Mammary epithelial cell (primary cell): ENCODE measurements at regions of chr14 and their contacts with region 1.

Region 1: DNA sequence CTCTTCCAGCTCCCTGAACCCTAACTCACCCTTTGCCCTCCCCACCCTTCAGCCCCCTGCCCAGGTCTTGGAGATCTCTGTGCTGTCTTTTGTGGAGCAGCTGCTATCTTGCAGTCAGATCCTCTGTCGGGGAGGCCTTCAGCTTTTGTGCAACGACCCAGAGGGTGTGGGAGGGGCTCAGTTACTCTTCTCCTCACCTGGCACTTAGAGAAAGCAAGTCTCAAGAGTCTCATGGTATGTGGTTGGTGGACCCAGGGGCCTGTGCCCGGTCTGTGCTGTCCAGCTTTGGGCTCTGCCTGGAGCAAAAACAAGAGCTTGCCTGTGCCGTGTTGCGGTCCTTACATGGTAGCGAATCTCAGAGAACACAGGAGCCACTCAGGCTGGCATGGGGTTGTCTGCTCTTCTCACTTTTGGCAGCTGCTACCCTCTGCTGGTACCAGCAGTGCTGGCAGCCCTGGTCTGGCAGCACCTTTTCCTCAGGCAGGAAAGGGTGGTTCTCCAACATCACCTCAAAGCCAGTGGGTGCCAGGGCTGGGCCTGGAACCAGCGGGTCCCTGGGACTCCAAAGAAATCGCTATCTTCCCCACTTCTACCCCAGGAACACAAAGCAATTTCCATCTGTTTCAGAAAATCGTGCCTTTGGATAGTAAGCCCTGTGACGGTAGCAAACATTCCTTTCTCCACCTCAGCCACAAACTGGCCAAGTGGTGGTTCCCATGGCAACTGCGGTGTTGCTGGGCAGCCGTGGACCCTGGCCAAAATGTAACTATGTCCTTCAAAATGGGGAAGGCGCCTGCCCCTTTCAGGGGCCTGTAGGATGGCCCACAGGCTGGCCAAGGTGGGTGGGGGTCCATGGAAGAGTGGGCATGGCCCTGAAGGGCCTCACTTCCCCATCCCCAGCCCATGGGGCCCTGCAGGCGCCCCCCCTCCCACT is 90.0 kb downstream of the RIN3 start:
- DNase-seq: peak; percentile 51
- H3K4me3 ChIP-seq: no peak overlapping the region
- H3K27ac ChIP-seq: no peak overlapping the region
- H3K4me1 ChIP-seq: peaks cover 14% of the 10 kb centered on the region
- H3K27me3 ChIP-seq: no peaks in the 10 kb centered on the region
- CTCF ChIP-seq: peak; percentile 36 to 77

Region 2: DNA sequence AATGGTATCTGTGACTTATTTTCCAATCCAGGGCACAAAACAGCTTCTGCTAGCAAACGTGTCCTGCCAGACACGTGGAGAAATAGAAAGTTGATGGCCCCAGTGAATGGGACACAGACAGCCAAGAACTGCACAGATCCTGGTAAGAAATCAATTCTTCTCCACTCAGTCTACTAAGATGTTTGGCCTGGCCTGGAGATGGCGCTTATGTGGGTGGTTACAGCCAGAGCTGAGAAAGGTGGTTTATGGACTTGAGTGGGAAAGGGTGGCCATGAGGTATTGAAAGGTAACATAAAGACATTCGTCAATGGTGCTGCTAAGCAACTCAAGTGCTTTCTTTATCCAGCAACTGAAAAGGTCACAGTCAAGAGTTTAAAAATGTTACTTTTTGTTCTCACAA is 277.7 kb before region 1 on chr14:
- CTCF ChIA-PET with region 1: no interaction called
- dilution Hi-C with region 1: no loop called
- in situ Hi-C with region 1: no loop called
- intact Hi-C with region 1: loop called (anchors 5 kb)
- DNase-seq: no peak
- H3K4me3 ChIP-seq: no peak overlapping the region
- H3K27ac ChIP-seq: no peak overlapping the region
- H3K4me1 ChIP-seq: no peaks in the 10 kb centered on the region
- H3K27me3 ChIP-seq: peaks cover 20% of the 10 kb centered on the region
- CTCF ChIP-seq: no peak

Region 3: GRCh38 chr14:92456215-92457015 is 147.2 kb before region 1 on chr14:
- CTCF ChIA-PET with region 1: interaction called, 5 read pairs
- dilution Hi-C with region 1: no loop called
- in situ Hi-C with region 1: no loop called
- intact Hi-C with region 1: loop called (anchors 5 kb)
- DNase-seq: peak; percentile 25
- H3K4me3 ChIP-seq: no peak overlapping the region
- H3K27ac ChIP-seq: no peak overlapping the region
- H3K4me1 ChIP-seq: no peaks in the 10 kb centered on the region
- H3K27me3 ChIP-seq: no peaks in the 10 kb centered on the region
- CTCF ChIP-seq: peak; percentile 38 to 49

Region 4: DNA sequence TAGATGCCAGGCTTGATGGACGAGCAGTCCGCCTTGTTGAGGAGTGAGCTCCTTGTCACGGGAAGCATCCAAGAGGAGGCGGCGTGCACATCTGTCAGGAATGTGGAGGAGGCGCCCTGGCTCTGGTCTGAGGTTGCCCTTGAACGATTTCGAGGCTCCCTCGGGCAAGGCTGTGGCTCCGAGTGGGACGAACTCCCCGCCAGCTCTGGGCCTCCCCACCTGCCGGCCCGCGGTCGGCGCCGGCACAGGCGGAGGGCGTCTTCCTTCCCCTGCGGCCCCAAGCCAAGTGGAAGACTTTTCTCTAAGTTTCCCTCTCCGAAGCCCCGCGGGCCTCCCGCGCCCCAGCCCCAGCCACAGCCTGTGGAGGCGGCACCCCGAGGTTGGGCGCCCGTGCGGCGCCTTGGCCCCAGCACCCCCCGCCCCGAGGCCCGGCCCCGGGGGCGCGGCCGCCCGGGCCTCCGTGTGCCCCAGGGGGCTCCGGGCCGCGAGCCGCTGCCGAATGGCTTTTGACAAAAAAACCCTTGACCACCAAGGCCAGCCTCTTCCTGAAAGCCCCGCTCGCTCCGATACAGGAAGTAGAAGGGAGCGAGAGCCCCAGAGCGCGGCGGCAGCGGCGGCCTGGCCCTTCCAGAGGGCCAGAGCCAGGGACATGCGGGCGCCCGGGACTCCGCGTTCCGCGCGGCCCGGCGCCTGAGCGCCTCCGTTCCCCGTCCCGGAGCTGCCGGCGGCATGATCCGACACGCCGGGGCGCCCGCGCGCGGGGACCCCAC is 90.2 kb before region 1 on chr14 and contains the start of gene RIN3:
- CTCF ChIA-PET with region 1: no interaction called
- dilution Hi-C with region 1: no loop called
- in situ Hi-C with region 1: no loop called
- intact Hi-C with region 1: loop called (anchors 5 kb)
- DNase-seq: peak; percentile 46
- H3K4me3 ChIP-seq: peak within 1 kb of the TSS; percentile 42 to 56 (median 44)
- H3K27ac ChIP-seq: peak within 1 kb of the TSS; percentile 18
- H3K4me1 ChIP-seq: peaks cover 18% of the 10 kb centered on the region
- H3K27me3 ChIP-seq: no peaks in the 10 kb centered on the region
- CTCF ChIP-seq: no peak
- total RNA-seq, gene RIN3: 3.5 to 14.5 TPM

Region 5: GRCh38 chr14:92651106-92651757 is 47.7 kb after region 1 on chr14:
- CTCF ChIA-PET with region 1: no interaction called
- dilution Hi-C with region 1: loop called (anchors 5 kb)
- in situ Hi-C with region 1: no loop called
- intact Hi-C with region 1: no loop called
- DNase-seq: no peak
- H3K4me3 ChIP-seq: no peak overlapping the region
- H3K27ac ChIP-seq: no peak overlapping the region
- H3K4me1 ChIP-seq: no peaks in the 10 kb centered on the region
- H3K27me3 ChIP-seq: no peaks in the 10 kb centered on the region
- CTCF ChIP-seq: no peak